Left ventricle myocardium superior (tissue), 1 donor: ENCODE measurements at regions of chr13 and their contacts with region 1.

Region 1: DNA sequence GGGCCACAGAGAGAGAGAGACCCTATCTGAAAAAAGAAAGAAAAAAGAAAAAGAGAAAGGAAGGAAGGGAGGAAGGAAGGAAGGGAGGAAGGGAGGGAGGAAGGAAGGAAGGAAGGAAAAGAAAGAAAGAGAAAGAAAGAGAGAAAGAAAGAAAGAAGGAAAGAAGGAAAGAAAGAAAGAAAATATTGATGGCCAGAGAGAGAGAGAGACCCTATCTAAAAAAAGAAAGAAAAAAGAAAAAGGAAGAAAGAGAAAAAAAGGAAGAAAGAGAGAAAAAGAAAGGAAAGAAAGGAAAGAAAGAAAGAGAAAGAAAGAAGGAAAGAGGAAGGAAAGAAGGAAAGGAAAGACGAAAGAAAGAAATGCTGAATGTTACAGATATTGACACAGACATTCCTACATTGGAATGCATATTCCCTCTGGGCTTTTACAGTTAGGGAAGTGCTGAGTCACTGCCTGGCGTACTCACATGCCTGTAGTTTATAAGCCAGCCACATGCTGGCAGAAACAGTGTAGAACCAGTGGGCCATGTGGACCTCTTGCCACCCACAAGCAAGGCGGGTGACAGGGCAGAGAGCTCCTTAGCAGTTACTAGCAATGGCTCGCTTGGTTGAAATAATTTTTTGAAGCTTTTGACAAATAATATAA is 34.6 kb upstream of the SLC46A3 start:
- DNase-seq: peak; percentile 56
- ATAC-seq: peak; percentile 77

Region 2: DNA sequence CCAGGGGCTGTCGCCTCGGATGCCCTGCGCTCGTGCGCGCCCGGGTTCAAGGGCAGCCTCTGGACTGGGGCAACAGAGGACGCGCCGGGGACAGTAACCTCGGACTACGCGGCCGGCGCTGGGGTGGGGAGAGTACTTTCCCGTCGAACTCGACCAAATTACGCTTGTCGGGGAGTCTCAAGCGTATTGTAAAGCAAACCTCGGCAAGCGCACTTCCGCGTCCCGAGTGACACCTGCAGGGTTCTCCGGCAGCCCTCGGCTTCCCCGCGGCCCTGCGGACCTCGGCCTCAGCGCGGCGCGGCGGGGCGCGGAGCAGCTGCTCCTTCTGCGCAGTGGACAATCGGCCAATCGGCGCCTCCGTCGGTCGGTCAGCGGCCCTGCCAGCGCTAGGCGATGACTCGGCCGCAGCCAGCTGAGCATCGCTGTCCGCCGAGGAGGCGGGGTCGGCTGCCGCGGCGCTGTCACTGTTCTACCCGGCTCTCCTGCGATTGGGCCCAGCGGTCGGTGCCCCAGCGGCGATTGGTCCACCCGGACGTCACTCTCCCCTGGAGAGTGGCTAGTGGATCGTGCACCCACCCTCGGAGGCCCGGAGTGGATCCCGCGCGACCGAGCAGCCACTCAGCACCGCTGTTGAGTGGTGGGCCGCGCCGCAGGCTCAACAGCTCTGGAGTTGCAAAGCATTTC is 34.7 kb before region 1 on chr13 and contains the start of gene SLC46A3:
- intact Hi-C with region 1: loop called (anchors 2 kb)
- DNase-seq: peak; percentile 100
- ATAC-seq: peak; percentile 98
- total RNA-seq, gene SLC46A3: 18.1 TPM